ENCODE measurements at regions of chr20 and their contacts with region 1.

Region 1: GRCh38 chr20:54407459-54407858 is 67.9 kb upstream of the DOK5 start:
- DNase-seq: no peak
- ATAC-seq: no peak
- H3K4me3 ChIP-seq: no peak overlapping the region
- H3K27ac ChIP-seq: no peak overlapping the region
- H3K4me1 ChIP-seq: no peaks in the 10 kb centered on the region
- H3K27me3 ChIP-seq: no peaks in the 10 kb centered on the region
- CTCF ChIP-seq: no peak
- EP300 ChIP-seq: no peak
- POLR2A ChIP-seq: no peak
- RAD21 ChIP-seq: no peak

Region 2: DNA sequence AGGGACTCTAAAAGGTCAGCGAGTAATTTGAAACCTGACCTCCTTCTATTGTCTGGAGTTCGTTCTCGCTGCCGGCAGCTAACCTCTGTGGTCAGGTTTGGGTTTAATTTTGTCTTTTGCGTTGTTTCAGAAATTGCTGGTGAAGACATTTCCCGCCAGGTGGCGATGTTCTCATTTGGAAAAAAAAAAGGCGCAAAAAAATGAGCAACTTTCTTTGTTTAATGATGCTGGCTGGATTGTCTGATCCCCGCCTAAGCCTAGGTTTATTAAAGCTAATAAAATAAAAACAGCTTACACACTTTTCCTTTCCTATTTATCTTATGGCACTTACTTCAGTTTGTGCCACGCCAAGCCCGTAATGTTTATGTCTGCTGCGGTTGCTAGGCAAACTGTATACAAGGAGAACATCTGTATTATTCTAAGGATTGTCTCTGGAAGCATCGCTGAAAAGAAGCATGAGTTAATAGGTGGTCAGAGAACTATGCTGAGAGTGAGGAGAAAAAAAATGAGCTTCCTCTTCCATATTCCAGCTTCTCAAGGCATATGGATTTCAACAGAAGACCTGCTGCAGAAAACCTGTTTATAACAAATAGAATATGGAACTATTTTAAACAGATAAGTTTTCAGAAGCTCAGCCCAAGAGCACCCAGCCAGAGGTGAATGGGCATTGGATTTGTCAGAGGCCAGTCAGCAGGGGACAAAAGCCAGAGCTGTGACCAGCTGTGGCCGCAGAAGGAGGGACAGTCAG is 273.6 kb after region 1 on chr20:
- CTCF ChIA-PET with region 1: no interaction called
- POLR2A ChIA-PET with region 1: no interaction called
- in situ Hi-C with region 1: no loop called
- intact Hi-C with region 1: no loop called
- DNase-seq: peak; percentile 11 to 61 (median 14)
- ATAC-seq: peak; percentile 64
- H3K4me3 ChIP-seq: no peak overlapping the region
- H3K27ac ChIP-seq: no peak overlapping the region
- H3K4me1 ChIP-seq: no peaks in the 10 kb centered on the region
- H3K27me3 ChIP-seq: no peaks in the 10 kb centered on the region
- CTCF ChIP-seq: peak; percentile 47 to 67 (median 49); a peak in 5 of 6 replicates
- EP300 ChIP-seq: no peak
- POLR2A ChIP-seq: no peak
- RAD21 ChIP-seq: peak in 1 of 2 experiments; percentile 53; a peak in 3 of 4 replicates

Region 3: DNA sequence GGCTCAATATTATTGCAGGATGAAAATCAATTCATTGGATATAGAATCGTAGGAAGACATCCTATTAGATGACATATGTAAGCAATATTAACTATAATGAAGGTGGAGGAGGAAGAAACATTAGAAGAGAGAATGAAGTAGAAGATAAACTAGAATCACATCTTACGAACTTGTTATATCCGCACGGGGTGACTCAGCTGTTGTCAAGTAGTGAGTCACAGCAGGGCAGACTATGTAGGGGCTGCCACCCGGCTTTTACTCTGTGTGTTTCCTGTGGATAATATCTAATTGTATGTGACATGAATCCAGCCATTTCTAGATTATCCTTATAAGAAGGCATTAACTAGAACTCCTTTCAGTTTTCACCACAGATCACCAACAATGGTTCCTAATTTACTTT is 588.1 kb after region 1 on chr20:
- CTCF ChIA-PET with region 1: no interaction called
- POLR2A ChIA-PET with region 1: no interaction called
- in situ Hi-C with region 1: loop called (anchors 10 kb)
- intact Hi-C with region 1: no loop called
- DNase-seq: no peak
- ATAC-seq: no peak
- H3K4me3 ChIP-seq: no peak overlapping the region
- H3K27ac ChIP-seq: no peak overlapping the region
- H3K4me1 ChIP-seq: no peaks in the 10 kb centered on the region
- H3K27me3 ChIP-seq: no peaks in the 10 kb centered on the region
- CTCF ChIP-seq: no peak
- EP300 ChIP-seq: no peak
- POLR2A ChIP-seq: no peak
- RAD21 ChIP-seq: no peak

Measured in K562 (cell line).